Common myeloid progenitor, CD34-positive (primary cell): ENCODE measurements at regions of chr16 and their contacts with region 1.

Region 1: DNA sequence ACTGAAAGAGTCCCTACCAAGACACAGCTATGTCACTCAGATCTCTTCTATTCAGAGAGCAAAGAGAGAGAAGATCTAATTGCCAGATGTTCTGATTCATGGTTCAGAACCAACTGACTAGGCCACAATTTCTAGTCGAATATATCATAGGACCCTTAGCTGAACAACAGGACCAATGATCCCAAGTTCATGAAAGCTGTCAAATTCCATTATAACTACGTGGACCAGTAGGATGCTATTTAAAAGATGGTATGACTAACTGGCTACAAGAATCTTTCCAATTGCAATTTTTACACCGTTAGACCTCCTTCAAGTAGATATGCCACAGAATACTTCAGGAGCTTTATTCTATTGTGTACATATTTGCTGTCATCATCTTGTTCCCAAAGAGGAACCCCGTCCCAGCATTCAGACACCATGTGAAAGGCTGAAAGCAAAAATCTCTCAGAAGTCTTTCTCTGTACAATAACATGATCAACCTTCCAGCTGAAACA is 26.0 kb downstream of the DCUN1D3 start:
- DNase-seq: no peak
- H3K4me3 ChIP-seq: no peak overlapping the region
- H3K27ac ChIP-seq: no peak overlapping the region
- H3K4me1 ChIP-seq: peaks cover 0 to 52% (median 28%) of the 10 kb centered on the region in 4 experiments
- H3K27me3 ChIP-seq: no peaks in the 10 kb centered on the region

Region 2: DNA sequence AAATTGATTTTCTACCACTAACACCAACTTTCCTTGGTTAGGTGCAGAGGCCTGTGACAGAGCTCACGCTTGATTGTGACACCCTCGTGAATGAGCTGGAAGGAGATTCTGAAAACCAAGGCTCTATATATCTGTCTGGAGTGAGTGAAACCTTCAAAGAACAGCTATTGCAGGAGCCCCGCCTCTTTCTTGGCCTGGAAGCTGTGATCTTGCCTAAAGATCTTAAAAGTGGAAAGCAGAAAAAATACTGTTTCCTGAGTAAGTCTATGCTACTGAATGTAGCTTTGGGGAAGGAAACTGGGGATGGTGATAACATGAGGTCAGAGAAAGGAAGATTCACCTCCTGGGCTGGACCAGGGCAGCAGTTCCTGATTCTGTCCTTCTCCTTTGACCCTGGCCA is 29.5 kb before region 1 on chr16:
- CTCF ChIA-PET with region 1: interaction called, 11 read pairs
- POLR2A ChIA-PET with region 1: no interaction called
- DNase-seq: peak; percentile 36 to 66 (median 57)
- H3K4me3 ChIP-seq: peak overlapping the region in 1 of 7 experiments; percentile 40
- H3K27ac ChIP-seq: peak overlapping the region in 1 of 2 experiments; percentile 64
- H3K4me1 ChIP-seq: peaks cover 12 to 62% (median 42%) of the 10 kb centered on the region in 4 experiments
- H3K27me3 ChIP-seq: no peaks in the 10 kb centered on the region